Activated B cell treated with CpG ODN at 0.5 μM for 24 hours (primary cell): ENCODE measurements at regions of chr11 and their contacts with region 1.

Region 1: GRCh38 chr11:42390116-42390515 is 921.7 kb upstream of the API5 start:
- DNase-seq: no peak
- ATAC-seq: no peak
- H3K4me3 Mint-ChIP-seq: no peak overlapping the region
- H3K27ac Mint-ChIP-seq: no peak overlapping the region
- H3K4me1 Mint-ChIP-seq: no peaks in the 10 kb centered on the region
- H3K27me3 Mint-ChIP-seq: no peaks in the 10 kb centered on the region
- CTCF ChIP-seq: no peak

Region 2: GRCh38 chr11:41116970-41117369 is 1273.1 kb before region 1 on chr11:
- CTCF ChIA-PET with region 1: no interaction called
- POLR2A ChIA-PET with region 1: no interaction called
- intact Hi-C with region 1: no loop called
- DNase-seq: no peak
- ATAC-seq: no peak
- H3K4me3 Mint-ChIP-seq: no peak overlapping the region
- H3K27ac Mint-ChIP-seq: no peak overlapping the region
- H3K4me1 Mint-ChIP-seq: no peaks in the 10 kb centered on the region
- H3K27me3 Mint-ChIP-seq: no peaks in the 10 kb centered on the region
- CTCF ChIP-seq: no peak

Region 3: DNA sequence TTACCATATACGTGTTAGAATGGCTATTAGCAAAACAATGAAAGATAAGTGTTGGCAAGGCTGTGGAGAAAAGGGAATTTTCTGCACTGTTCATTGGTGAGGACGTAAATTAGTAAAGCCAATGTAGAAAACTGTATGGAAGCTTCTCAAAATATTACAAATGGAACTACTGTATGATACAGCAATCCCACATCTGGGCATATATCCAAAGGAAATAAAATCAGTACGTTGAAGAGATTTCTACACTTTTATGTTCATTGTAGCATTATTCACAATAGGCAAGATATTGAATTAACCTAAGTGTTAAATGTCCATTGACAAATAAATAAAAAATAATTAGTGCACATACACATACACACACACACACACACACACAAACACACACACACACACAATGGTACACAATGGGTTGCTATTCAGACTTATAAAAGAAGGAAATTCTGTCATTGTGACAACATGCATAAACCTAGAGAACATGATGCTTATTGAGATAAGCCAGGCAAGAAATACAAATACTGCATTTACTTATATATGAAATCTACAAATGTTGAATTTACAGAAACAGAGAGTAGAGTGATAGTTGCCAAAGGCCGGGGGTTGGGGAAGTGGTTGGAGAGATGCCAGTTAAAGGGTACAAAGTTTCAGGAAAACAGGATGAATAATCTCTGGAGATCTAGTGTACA is 364.9 kb before region 1 on chr11:
- CTCF ChIA-PET with region 1: no interaction called
- POLR2A ChIA-PET with region 1: no interaction called
- intact Hi-C with region 1: no loop called
- DNase-seq: no peak
- ATAC-seq: no peak
- H3K4me3 Mint-ChIP-seq: no peak overlapping the region
- H3K27ac Mint-ChIP-seq: no peak overlapping the region
- H3K4me1 Mint-ChIP-seq: no peaks in the 10 kb centered on the region
- H3K27me3 Mint-ChIP-seq: no peaks in the 10 kb centered on the region
- CTCF ChIP-seq: no peak

Region 4: DNA sequence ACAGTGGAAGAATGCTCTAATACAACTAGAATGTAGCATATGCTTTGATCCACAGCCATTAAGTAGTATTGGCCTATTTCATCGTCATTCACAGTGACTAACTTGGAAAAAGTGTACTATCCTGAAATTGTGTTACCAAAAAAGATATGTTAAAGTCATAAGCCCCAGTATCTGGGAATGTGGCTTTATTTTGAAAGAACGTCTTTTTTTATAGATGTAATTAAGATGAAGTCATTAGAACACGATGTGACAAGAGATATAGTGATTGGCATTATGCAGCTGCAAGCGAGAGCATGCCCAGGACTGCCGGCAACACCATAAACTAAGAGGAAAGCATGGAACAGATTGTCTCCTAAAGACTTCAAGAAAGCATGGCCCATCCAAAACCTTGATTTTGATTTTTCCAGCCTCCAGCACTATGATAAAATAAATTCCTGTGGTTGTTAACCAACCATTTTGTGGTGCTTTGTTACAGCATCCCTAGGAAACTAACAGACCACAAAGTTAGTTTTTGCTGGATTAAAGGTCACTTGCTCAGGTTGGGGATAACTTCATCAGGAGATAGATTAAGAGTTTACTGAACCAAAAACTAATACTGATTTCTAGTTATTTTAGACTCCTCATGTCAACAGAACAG is 60.1 kb before region 1 on chr11:
- CTCF ChIA-PET with region 1: no interaction called
- POLR2A ChIA-PET with region 1: no interaction called
- intact Hi-C with region 1: loop called (anchors 10 kb)
- DNase-seq: no peak
- ATAC-seq: no peak
- H3K4me3 Mint-ChIP-seq: no peak overlapping the region
- H3K27ac Mint-ChIP-seq: no peak overlapping the region
- H3K4me1 Mint-ChIP-seq: no peaks in the 10 kb centered on the region
- H3K27me3 Mint-ChIP-seq: no peaks in the 10 kb centered on the region
- CTCF ChIP-seq: no peak

Region 5: DNA sequence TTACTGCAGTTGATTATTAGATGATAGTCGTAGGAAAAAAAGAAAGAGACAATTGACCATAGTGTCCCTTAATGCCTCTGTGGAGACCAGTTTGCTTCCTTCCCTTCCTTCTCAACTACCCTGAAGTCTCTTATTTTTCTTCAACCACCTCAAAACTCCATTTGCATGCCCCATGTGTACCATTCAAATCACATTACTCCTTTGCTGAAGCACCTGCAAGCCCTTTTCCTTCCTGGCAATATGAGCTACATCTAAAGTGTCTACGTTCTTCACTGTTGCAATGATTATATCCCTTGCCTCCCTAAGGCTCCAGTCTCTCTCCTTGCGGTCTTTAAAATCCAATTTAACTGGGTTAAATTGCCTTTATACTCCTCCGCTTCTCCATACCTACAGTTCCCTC is 54.3 kb after region 1 on chr11:
- CTCF ChIA-PET with region 1: no interaction called
- POLR2A ChIA-PET with region 1: no interaction called
- intact Hi-C with region 1: no loop called
- DNase-seq: no peak
- ATAC-seq: no peak
- H3K4me3 Mint-ChIP-seq: no peak overlapping the region
- H3K27ac Mint-ChIP-seq: no peak overlapping the region
- H3K4me1 Mint-ChIP-seq: no peaks in the 10 kb centered on the region
- H3K27me3 Mint-ChIP-seq: no peaks in the 10 kb centered on the region
- CTCF ChIP-seq: no peak